IMR-90 (cell line): ENCODE measurements at regions of chr1 and their contacts with region 1.

Region 1: GRCh38 chr1:115239148-115239820 is 98.8 kb downstream of the NGF start:
- DNase-seq: peak; percentile 76
- ATAC-seq: peak; percentile 92
- H3K4me3 ChIP-seq: no peak overlapping the region
- H3K27ac ChIP-seq: peak overlapping the region; percentile 42; the same call in 1 of the 2 replicates
- H3K4me1 ChIP-seq: peaks cover 6% of the 10 kb centered on the region
- H3K27me3 ChIP-seq: no peaks in the 10 kb centered on the region
- CTCF ChIP-seq: no peak
- POLR2A ChIP-seq: no peak
- RAD21 ChIP-seq: no peak

Region 2: GRCh38 chr1:115189814-115190539 is 49.3 kb before region 1 on chr1:
- CTCF ChIA-PET with region 1: no interaction called
- POLR2A ChIA-PET with region 1: no interaction called
- dilution Hi-C with region 1: no loop called
- in situ Hi-C with region 1: no loop called
- intact Hi-C with region 1: loop called (anchors 5 kb)
- DNase-seq: peak; percentile 95
- ATAC-seq: peak; percentile 84
- H3K4me3 ChIP-seq: no peak overlapping the region
- H3K27ac ChIP-seq: peak overlapping the region; percentile 18; the same call in 1 of the 2 replicates
- H3K4me1 ChIP-seq: peaks cover 21% of the 10 kb centered on the region
- H3K27me3 ChIP-seq: no peaks in the 10 kb centered on the region
- CTCF ChIP-seq: no peak
- POLR2A ChIP-seq: peak; percentile 68; the same call in 1 of the 2 replicates
- RAD21 ChIP-seq: peak; percentile 28

Region 3: GRCh38 chr1:115198938-115199337 is 40.3 kb before region 1 on chr1:
- CTCF ChIA-PET with region 1: interaction called, 3 read pairs
- POLR2A ChIA-PET with region 1: no interaction called
- dilution Hi-C with region 1: no loop called
- in situ Hi-C with region 1: no loop called
- intact Hi-C with region 1: loop called (anchors 1 kb)
- DNase-seq: peak; percentile 63
- ATAC-seq: peak; percentile 24; the same call in 1 of the 2 replicates
- H3K4me3 ChIP-seq: no peak overlapping the region
- H3K27ac ChIP-seq: no peak overlapping the region
- H3K4me1 ChIP-seq: no peaks in the 10 kb centered on the region; the same call in 1 of the 2 replicates
- H3K27me3 ChIP-seq: no peaks in the 10 kb centered on the region
- CTCF ChIP-seq: no peak
- POLR2A ChIP-seq: no peak
- RAD21 ChIP-seq: no peak